ENCODE measurements at regions of chr16 and their contacts with region 1.

Region 1: DNA sequence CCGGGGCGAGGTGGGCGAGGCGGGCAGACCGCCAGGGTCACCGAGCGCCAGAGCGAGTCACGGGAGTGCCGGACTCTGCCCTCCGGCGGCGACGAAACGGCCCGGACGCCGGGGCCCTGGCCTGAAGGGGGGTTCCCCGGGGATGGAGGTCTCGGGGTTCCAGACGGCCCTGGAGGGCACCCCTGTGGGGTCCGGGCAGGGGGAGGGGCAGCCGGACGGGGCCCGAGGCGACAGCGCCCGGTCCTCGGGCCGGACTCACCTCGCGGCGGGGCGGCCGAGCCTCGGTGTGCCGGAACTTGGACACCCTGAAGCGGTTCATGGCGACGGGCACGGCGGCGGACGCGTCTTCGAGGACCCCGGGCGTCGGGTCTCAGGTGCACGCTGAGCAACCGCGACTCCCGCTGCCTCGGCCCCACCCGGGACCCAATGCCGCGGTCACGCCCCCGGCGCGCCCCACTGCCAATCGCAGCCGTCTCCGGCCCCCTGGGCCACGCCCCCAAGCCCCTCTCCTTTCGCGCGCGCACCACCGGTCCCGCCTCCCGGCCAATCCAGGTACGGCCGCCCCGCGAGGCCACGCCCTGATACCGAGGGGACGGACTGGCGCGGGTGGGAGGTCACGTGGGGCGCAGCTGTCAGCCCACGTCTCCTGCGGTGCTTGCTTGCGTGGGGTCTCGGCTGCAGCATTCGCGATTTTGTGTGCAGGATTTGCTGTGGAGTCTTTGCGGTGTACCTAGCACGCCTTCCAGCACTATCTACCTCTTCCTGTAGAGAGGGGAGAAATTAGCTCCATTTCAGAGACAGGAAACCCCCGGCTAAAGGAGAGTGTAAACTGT is at the start of gene CORO7:
- DNase-seq: peak; percentile 98
- H3K4me3 Mint-ChIP-seq: peak within 1 kb of the TSS; percentile 95
- H3K27ac Mint-ChIP-seq: peak within 1 kb of the TSS; percentile 99
- H3K4me1 Mint-ChIP-seq: peaks cover 47% of the 10 kb centered on the region
- H3K27me3 Mint-ChIP-seq: peaks cover 4% of the 10 kb centered on the region
- total RNA-seq, gene CORO7: 244 to 245 TPM

Region 2: GRCh38 chr16:4307215-4308037 is 109.0 kb before region 1 on chr16:
- CTCF ChIA-PET with region 1: no interaction called
- POLR2A ChIA-PET with region 1: interaction called, 10 read pairs
- DNase-seq: peak; percentile 97
- H3K4me3 Mint-ChIP-seq: peak overlapping the region; percentile 93
- H3K27ac Mint-ChIP-seq: peak overlapping the region; percentile 92
- H3K4me1 Mint-ChIP-seq: peaks cover 30% of the 10 kb centered on the region
- H3K27me3 Mint-ChIP-seq: no peaks in the 10 kb centered on the region

Region 3: DNA sequence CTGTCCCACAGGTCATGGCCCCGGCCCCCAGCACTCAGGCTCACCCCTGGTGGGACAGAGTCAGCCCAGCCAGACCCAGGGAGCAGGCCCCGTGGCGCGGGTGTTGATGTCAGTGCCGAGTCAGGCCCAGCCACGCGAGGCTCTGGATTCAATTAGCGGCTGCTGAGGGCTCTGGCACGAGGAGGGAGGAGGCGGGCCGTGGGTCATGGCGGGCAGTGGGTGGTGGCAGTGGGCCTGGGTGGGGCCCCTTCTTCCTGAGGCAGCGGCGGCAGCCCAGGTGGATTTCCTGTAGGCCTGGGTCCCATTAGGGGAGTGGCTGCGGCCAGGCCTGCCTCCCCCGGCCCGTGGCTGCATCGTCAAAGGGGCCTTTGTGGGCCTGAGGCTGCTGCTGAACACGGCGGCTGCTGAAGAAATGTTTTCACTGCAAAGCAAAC is 31.9 kb before region 1 on chr16:
- CTCF ChIA-PET with region 1: no interaction called
- POLR2A ChIA-PET with region 1: no interaction called
- DNase-seq: no peak
- H3K4me3 Mint-ChIP-seq: no peak overlapping the region
- H3K27ac Mint-ChIP-seq: no peak overlapping the region
- H3K4me1 Mint-ChIP-seq: peaks cover 4% of the 10 kb centered on the region
- H3K27me3 Mint-ChIP-seq: no peaks in the 10 kb centered on the region

Region 4: GRCh38 chr16:4437366-4437765 is 20.9 kb after region 1 on chr16:
- CTCF ChIA-PET with region 1: no interaction called
- POLR2A ChIA-PET with region 1: interaction called, 10 read pairs
- DNase-seq: no peak
- H3K4me3 Mint-ChIP-seq: no peak overlapping the region
- H3K27ac Mint-ChIP-seq: no peak overlapping the region
- H3K4me1 Mint-ChIP-seq: peaks cover 14% of the 10 kb centered on the region
- H3K27me3 Mint-ChIP-seq: no peaks in the 10 kb centered on the region

Region 5: DNA sequence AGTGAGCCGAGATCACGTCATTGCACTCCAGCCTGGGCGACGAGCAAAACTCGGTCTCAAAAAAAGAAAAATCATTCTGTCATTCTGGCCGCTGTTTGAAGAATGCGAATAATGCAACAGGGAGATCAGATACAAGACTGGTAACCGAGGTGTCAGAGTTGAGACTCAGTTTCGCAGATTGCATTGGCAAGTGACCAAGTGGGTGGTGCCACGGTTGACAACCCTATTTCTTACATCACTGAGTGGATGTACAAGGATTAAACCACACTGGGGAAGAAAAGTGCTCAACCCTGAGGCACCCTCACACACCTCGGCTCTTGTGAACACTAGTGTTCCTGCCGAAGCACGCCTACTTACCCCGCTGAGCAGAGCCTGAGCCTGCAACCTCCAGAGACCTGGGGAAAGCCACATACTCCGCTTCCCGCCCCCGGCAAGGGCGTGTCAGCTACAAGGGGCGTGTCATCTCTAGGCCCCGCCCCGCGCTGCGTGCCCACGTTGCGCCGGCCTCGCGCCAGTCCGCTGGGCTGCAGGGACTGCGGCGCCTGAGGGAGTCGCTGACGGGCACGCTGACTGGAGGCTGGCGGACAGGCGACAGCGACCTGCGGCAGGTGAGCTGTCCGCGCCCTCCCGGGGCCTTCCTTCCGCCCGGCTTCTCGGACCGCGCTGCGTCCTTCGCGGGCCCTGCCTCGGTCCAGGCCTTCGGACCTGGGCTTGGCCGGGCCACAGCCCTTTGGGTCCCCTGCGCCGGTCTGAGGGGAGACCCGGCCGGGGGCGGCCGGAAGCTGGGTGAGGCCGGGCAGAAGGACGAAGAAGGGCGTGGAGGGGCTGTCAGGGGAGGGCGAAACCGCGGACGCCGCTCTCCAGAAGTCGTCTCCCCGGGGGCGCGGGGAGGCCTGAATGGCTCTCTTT is 59.7 kb after region 1 on chr16 and contains the start of gene HMOX2:
- CTCF ChIA-PET with region 1: interaction called, 7 read pairs
- POLR2A ChIA-PET with region 1: interaction called, 85 read pairs
- DNase-seq: peak; percentile 96
- H3K4me3 Mint-ChIP-seq: peak within 1 kb of the TSS; percentile 91
- H3K27ac Mint-ChIP-seq: peak within 1 kb of the TSS; percentile 93
- H3K4me1 Mint-ChIP-seq: peaks cover 43% of the 10 kb centered on the region
- H3K27me3 Mint-ChIP-seq: no peaks in the 10 kb centered on the region
- total RNA-seq, gene HMOX2: 77.4 to 83.4 TPM

Region 6: GRCh38 chr16:4734063-4734729 is 317.8 kb after region 1 on chr16 and contains the starts of genes ANKS3 and DNAAF8:
- CTCF ChIA-PET with region 1: no interaction called
- POLR2A ChIA-PET with region 1: interaction called, 11 read pairs
- DNase-seq: peak; percentile 81
- H3K4me3 Mint-ChIP-seq: peak within 1 kb of the TSS; percentile 78
- H3K27ac Mint-ChIP-seq: peak within 1 kb of the TSS; percentile 78
- H3K4me1 Mint-ChIP-seq: peaks cover 24% of the 10 kb centered on the region
- H3K27me3 Mint-ChIP-seq: no peaks in the 10 kb centered on the region
- total RNA-seq, gene ANKS3: 10.0 to 10.2 TPM
- total RNA-seq, gene DNAAF8: not detected

Measured in activated CD4-positive, alpha-beta memory T cell treated with anti-CD3 and anti-CD28 coated beads, Interleukin-2, amount 10 ng/mL, durations not matched to agents 7 days and 5 days (primary cell).